ENCODE measurements at regions of chr2 and their contacts with region 1.

Region 1: DNA sequence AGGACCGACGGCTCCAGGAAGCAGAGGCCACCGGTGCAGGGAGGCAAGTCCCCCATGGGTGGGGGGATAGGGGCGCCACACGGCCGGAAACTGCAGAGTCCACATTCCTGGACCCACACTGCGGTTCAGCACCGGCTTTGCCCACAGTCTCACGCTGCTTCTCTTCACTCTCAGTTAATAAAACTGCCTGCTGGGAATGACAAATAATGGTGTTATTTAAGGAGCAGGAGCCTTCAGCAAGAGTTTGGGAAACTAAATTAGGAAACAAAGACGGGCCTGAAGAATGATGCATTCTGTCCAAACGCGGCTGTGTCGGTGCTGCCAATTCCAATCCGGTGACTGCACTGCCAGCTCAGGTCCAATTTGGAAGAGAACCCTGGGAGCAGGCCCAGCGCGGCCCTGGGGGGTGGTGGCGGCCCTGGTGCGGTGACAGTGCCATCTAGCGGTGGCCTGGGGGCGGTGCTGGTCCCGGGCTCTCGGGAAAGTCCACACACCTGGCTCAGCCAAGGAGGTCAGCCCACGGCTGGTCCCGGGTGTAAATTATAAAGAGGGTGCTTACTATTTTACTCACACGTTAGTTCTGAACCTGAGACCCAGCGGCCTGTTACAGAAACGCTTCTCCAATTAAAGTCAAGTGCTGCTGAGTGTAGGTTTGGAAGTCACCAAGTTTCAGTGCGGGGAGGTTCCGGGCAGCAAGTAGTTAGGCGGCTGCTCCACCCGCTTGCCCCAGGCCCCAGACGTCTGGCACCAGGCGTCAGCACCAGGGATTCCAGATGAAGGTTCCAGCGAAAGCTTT is 73.1 kb upstream of the PXDN start:
- DNase-seq: peak; percentile 93
- H3K4me3 ChIP-seq: peak overlapping the region; percentile 12; the same call in 1 of the 2 replicates
- H3K27ac ChIP-seq: peak overlapping the region; percentile 93
- H3K27me3 ChIP-seq: no peaks in the 10 kb centered on the region
- CTCF ChIP-seq: peak; percentile 98

Region 2: GRCh38 chr2:1675633-1676032 is 141.8 kb before region 1 on chr2:
- CTCF ChIA-PET with region 1: interaction called, 12 read pairs
- POLR2A ChIA-PET with region 1: interaction called, 3 read pairs
- DNase-seq: peak; percentile 90
- H3K4me3 ChIP-seq: no peak overlapping the region
- H3K27ac ChIP-seq: peak overlapping the region; percentile 83
- H3K27me3 ChIP-seq: no peaks in the 10 kb centered on the region
- CTCF ChIP-seq: peak; percentile 85

Region 3: DNA sequence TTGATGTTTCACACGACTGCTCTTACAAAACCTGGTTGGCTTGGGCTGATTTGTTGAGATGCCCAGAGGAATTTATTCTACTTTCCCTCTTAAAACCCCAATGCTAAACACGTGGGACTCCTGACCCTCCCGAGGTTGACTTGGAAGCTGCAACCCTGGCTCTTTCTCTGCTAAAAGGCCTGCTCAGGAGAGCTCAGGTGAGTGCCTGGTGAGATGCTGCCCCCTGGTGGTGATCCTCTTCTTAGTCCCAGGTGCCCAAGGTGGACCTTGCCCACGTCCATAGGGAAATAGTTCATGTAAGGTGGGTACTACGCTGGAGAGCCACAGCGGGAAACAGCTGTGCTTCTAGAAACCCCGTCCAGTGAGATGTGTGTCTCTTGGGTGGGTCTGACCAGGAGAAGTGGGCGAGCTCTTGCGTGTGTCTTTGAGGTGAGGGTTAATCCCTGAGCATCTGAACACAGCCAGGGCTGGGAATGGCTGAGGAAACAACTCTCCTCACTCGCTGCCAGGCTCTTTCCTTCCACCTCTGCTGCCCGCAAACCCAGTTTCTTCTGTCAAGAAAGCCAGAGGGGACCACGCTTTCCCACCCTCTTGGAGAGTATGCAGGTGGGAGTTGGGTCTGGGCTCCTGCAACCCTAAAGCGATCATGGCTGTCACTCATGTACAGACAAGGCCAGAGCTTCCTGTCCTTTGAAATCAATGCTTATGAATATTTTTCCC is 47.6 kb before region 1 on chr2:
- CTCF ChIA-PET with region 1: interaction called, 10 read pairs
- POLR2A ChIA-PET with region 1: no interaction called
- DNase-seq: no peak
- H3K4me3 ChIP-seq: no peak overlapping the region
- H3K27ac ChIP-seq: no peak overlapping the region
- H3K27me3 ChIP-seq: peaks cover 12% of the 10 kb centered on the region
- CTCF ChIP-seq: peak; percentile 85

Region 4: DNA sequence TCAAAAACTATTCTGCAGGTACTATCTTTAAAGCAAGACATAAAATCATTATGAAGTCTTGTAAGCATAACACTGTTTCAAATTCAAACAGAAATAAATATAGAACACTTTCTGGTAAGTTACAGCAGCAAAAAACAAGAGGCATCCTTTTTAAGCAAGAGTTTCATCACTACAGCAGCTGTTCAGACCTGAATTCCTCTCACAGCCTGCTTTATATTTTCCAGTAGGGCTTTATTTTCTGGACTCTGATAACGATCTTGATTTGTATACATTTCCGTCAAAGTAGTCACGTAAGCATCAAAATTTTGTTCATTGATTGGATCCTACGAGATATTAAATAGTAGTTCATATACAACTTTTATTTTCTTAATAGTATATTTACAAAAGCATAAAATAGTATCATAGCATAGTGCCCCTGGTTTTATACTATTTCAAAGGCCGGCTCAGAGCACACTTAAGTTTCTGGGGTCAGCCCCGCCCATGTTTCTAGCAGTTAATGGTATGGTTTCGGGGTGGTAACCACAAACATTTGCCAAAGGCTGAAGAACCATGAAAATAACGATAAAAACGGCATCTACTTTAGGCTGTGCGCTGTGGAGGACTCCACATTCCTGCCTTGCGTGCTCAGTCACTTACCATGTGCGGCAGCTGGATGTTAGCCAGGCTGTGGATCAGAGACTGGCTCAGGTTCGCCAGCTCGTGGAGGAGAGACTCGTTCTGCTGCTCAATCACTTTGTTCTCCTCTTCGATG is 25.6 kb before region 1 on chr2:
- CTCF ChIA-PET with region 1: interaction called, 18 read pairs
- POLR2A ChIA-PET with region 1: interaction called, 7 read pairs
- DNase-seq: peak; percentile 71
- H3K4me3 ChIP-seq: no peak overlapping the region
- H3K27ac ChIP-seq: peak overlapping the region; percentile 82
- H3K27me3 ChIP-seq: no peaks in the 10 kb centered on the region
- CTCF ChIP-seq: 0 out of 2 replicates have a peak, but pooled peaks have one; percentile 9

Region 5: DNA sequence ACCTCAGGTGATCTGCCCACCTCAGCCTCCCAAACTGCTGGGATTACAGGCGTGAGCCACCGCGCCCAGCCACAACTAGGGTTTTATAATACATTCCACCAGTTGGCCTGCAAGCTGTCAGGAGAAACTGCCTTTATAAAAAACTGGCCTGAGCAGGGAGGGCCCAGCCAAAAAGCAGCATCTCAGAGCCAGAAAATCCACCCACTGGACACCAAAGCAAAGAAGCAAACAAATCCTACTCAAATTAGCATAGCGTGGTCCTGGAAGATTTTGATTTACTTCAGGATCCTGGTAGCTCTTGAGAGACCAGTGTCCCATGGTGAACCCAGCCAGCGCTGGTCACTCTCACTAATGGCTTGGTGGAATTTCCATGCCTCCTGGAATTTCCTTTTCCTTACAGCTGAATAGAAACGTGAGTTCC is 13.1 kb before region 1 on chr2:
- CTCF ChIA-PET with region 1: interaction called, 15 read pairs
- POLR2A ChIA-PET with region 1: no interaction called
- DNase-seq: no peak
- H3K4me3 ChIP-seq: no peak overlapping the region
- H3K27ac ChIP-seq: no peak overlapping the region
- H3K27me3 ChIP-seq: peaks cover 21% of the 10 kb centered on the region
- CTCF ChIP-seq: no peak